IMR-90 (cell line): ENCODE measurements at regions of chr17 and their contacts with region 1.

Region 1: DNA sequence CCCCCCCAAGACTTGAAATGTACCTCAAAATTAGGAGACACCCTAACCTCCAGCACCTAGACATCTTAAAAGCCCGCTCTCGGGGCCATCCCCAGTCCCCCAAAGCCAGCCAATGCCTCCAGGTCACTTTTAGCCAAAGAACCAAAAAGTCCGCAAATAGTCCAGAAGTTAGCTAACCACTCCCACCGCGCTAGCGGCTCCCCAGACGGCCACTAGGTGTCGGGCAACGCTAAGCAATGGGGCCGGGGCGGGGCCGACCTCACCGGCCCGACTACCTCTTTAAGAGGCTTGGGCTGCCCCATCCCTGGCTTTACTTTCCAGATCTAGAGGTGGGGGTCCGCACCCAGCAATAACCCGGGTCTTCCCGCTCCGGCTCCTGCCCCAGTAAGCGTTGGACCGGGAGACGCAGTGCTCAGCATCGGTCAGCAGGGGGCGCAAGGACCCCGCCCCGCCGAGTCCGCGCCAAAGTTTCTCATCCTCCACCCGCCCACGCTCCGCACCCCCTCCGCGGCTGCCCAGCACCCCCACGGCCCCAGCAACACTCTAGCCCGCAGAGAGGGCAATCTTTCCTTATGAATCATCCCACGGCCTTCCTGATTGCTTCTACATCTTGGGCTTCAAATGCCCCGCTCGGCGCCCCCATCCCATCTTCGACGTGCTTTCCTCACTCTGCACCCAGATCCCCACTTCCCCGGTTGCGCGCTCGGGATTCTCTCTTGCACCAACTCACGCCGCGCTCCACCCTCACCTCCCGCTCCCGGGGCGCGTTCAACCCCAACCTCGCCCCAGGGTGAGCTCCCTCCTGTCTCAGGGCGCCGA is 765 bp downstream of the COL1A1 start:
- DNase-seq: peak; percentile 82
- ATAC-seq: peak; percentile 24
- H3K4me3 ChIP-seq: peak overlapping the region; percentile 80
- H3K27ac ChIP-seq: peak overlapping the region; percentile 99
- H3K4me1 ChIP-seq: peaks cover 49% of the 10 kb centered on the region
- H3K27me3 ChIP-seq: no peaks in the 10 kb centered on the region
- CTCF ChIP-seq: peak; percentile 67
- POLR2A ChIP-seq: peak; percentile 16
- RAD21 ChIP-seq: peak; percentile 70

Region 2: DNA sequence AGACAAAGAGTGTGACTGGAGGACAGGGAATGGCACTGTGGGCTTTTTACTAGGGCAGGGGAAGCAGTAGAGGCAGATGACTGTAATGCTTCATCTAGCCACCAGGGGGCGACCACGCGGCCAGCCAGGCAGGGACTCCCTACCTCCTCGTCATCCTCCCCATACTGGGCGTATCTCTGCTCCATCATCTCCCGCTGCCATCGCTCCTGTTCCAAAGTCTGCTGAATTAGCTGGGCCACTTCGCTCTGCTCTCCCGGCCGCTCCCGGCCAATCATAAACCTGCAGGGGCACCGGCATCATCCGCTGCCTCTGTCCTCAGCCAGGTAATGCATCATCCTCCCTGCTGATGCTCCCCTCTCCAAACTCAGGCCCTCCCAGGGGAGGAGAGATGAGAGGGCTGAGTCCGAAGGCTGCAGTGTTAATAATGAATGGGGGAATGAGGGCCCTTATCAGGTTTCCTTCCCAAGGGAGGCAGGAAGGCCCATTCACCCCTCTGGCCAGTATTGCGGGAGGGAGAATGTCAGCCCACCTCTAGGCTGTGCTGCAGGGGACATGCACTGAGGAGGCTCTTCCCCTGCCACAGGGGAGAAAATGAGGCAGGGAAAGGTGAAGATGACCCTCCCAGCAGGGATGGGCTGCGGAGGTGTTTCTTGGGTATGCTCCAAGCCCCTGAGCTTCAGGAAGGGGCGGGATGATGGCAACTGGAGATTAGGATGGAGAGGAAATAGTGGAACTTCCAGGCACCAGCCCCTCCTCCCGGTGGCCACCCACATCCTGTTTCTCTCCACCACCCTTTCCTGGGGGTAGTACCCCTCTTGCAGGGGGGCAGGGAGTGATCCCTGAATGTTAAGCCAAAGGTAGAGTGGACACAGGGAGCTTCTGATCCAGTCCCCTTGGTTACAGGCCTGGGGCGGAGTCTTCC is 60.5 kb before region 1 on chr17:
- CTCF ChIA-PET with region 1: no interaction called
- POLR2A ChIA-PET with region 1: interaction called, 13 read pairs
- dilution Hi-C with region 1: no loop called
- in situ Hi-C with region 1: no loop called
- intact Hi-C with region 1: no loop called
- DNase-seq: peak; percentile 73
- ATAC-seq: peak; percentile 98
- H3K4me3 ChIP-seq: no peak overlapping the region
- H3K27ac ChIP-seq: no peak overlapping the region
- H3K4me1 ChIP-seq: no peaks in the 10 kb centered on the region
- H3K27me3 ChIP-seq: no peaks in the 10 kb centered on the region
- CTCF ChIP-seq: peak; percentile 89
- POLR2A ChIP-seq: no peak
- RAD21 ChIP-seq: peak; percentile 82

Region 3: DNA sequence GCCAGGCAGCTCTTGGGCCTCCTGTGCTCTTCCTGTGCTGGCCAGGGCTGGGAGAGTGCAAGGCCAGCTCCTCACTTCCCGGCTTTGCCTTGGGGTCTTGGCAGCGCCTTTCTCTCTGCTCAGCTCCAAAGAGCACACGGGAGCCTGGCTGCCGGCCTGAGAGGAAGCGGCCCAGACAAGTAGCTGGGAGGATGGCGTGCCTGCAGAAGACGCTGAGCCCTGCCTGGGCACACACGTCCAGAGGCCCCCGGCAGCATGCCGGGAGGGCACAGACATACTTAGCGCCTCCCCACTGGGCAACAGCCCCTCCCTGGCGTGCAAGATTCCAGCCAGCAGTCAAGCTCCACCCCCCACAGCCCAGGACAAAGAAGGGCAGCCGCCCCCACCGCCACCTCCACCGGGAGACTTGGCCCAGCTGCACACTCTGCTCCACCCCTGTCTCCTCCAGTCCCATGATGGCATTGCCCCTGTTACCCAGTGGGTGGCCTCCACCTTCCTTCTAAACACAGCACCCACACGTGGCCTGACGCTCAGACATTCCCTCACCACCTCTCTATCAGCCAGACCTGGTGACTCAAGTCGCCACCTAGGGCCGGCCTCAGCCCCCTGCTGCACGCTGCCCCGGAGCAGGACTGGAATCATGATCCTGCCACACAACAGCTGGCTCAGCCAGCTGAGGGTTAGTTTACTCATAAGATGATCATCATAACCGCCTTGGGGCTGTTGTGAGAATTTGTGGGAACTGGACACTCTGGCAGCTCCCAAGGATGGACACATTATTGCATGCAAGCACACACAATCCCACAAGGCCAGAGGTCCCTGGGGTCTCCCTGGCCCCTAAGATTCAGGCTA is 22.5 kb before region 1 on chr17:
- CTCF ChIA-PET with region 1: interaction called, 4 read pairs
- POLR2A ChIA-PET with region 1: interaction called, 13 read pairs
- dilution Hi-C with region 1: no loop called
- in situ Hi-C with region 1: no loop called
- intact Hi-C with region 1: no loop called
- DNase-seq: peak; percentile 99
- ATAC-seq: peak; percentile 63
- H3K4me3 ChIP-seq: no peak overlapping the region
- H3K27ac ChIP-seq: peak overlapping the region; percentile 84
- H3K4me1 ChIP-seq: peaks cover 30% of the 10 kb centered on the region
- H3K27me3 ChIP-seq: no peaks in the 10 kb centered on the region
- CTCF ChIP-seq: peak; percentile 53
- POLR2A ChIP-seq: no peak; the same call in 1 of the 2 replicates
- RAD21 ChIP-seq: no peak

Region 4: DNA sequence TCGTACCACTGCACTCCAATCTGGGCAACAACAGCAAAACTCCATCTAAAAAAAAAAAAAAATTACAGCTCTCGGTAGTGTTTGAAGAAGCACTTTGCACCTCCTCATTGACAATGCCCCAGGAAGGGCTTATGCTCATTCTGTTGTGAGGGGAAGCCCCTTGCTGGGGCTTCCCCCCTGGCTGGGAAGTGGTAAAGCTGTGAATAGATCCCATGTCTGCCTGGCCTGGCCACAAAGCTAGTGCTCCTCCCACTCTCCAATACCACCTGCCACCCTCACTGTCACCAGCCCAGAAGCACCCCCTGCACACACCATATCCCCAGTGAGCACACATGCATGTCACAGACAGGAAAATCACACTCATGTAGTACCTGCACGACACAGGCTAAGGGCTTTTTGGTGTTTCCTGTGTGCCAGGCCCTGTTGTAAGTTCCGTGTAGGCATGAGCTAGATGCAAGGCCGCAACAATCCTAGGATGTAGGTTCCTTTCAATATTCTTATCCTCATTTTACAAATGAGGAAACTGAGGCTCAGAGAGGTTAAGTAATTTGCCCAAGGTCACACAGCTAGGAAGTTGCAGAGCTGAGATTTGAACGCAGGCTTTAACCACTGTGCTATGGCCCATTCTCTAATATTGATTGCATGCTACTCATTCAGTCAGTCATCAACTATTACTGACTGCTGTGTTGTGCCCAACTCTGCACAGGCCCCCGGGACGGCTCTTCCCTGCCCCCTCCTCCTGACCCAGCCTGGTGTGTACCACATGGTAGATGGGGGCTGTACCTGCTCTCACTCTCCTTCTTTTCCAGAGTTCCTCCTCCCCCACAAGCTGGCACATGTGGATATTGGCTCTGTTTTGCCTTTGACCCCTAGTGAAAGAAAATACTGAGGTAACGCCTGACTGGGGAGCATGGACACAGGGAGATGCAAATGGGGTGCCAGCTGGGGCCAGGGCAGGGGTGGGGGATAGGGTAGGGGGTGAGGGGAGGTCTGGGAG is 12.7 kb after region 1 on chr17:
- CTCF ChIA-PET with region 1: interaction called, 4 read pairs
- POLR2A ChIA-PET with region 1: interaction called, 159 read pairs
- dilution Hi-C with region 1: no loop called
- in situ Hi-C with region 1: no loop called
- intact Hi-C with region 1: loop called (anchors 1 kb)
- DNase-seq: peak; percentile 51
- ATAC-seq: no peak
- H3K4me3 ChIP-seq: no peak overlapping the region
- H3K27ac ChIP-seq: peak overlapping the region; percentile 17; the same call in 1 of the 2 replicates
- H3K4me1 ChIP-seq: peaks cover 55% of the 10 kb centered on the region
- H3K27me3 ChIP-seq: no peaks in the 10 kb centered on the region
- CTCF ChIP-seq: peak; percentile 27; the same call in 1 of the 2 replicates
- POLR2A ChIP-seq: no peak
- RAD21 ChIP-seq: peak; percentile 41; the same call in 1 of the 2 replicates

Region 5: GRCh38 chr17:50234581-50234980 is 33.9 kb after region 1 on chr17:
- CTCF ChIA-PET with region 1: no interaction called
- POLR2A ChIA-PET with region 1: interaction called, 10 read pairs
- dilution Hi-C with region 1: no loop called
- in situ Hi-C with region 1: no loop called
- intact Hi-C with region 1: no loop called
- DNase-seq: no peak
- ATAC-seq: no peak
- H3K4me3 ChIP-seq: no peak overlapping the region
- H3K27ac ChIP-seq: no peak overlapping the region
- H3K4me1 ChIP-seq: peaks cover 5% of the 10 kb centered on the region; the same call in 1 of the 2 replicates
- H3K27me3 ChIP-seq: no peaks in the 10 kb centered on the region
- CTCF ChIP-seq: no peak
- POLR2A ChIP-seq: no peak
- RAD21 ChIP-seq: no peak

Region 6: DNA sequence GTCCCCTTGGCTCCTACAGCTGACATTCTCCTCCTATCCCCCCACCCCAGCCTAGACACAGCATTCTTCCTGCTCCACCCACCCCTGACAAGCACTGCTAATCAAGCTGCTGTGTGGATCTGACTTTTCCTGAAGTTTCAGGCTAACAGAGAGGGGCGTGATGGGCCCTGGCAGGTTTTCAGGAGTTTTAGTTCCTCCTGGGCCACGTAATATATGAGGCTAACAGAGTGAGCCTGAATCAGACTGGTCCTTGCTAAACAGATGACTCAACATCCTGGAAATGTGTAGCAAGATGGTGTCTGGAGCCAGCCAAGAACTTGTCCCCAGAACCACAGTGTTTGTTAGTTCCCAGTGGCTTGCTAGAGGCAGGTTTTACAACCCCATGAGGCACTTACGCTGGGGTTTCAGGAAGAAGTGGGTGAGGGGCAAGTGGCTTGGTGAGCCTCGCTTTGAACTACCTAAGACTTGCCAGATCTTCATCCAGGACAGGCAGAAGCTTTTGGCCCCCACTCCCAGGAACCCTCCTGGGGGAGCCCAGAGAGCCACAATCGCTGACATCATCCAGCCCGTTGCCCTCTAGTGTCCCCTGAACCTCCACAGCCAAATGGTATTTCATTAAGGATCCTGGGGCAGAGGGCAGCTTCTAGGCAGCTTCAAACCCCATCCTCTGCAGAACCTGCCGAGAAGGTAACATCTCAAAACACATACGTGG is 89.5 kb after region 1 on chr17:
- CTCF ChIA-PET with region 1: no interaction called
- POLR2A ChIA-PET with region 1: interaction called, 12 read pairs
- dilution Hi-C with region 1: no loop called
- in situ Hi-C with region 1: no loop called
- intact Hi-C with region 1: no loop called
- DNase-seq: peak; percentile 100
- ATAC-seq: peak; percentile 88
- H3K4me3 ChIP-seq: peak overlapping the region; percentile 8
- H3K27ac ChIP-seq: peak overlapping the region; percentile 90
- H3K4me1 ChIP-seq: peaks cover 25% of the 10 kb centered on the region
- H3K27me3 ChIP-seq: no peaks in the 10 kb centered on the region
- CTCF ChIP-seq: no peak
- POLR2A ChIP-seq: peak; percentile 55
- RAD21 ChIP-seq: no peak; the same call in 1 of the 2 replicates

Region 7: GRCh38 chr17:50828508-50829170 is 628.0 kb after region 1 on chr17:
- CTCF ChIA-PET with region 1: no interaction called
- POLR2A ChIA-PET with region 1: no interaction called
- dilution Hi-C with region 1: no loop called
- in situ Hi-C with region 1: no loop called
- intact Hi-C with region 1: no loop called
- DNase-seq: no peak
- ATAC-seq: no peak
- H3K4me3 ChIP-seq: no peak overlapping the region
- H3K27ac ChIP-seq: no peak overlapping the region
- H3K4me1 ChIP-seq: no peaks in the 10 kb centered on the region
- H3K27me3 ChIP-seq: peaks cover 10% of the 10 kb centered on the region; the same call in 1 of the 2 replicates
- CTCF ChIP-seq: no peak
- POLR2A ChIP-seq: no peak
- RAD21 ChIP-seq: no peak